ENCODE measurements at regions of chr7 and their contacts with region 1.

Region 1: GRCh38 chr7:25894902-25895791 is 256.9 kb upstream of the NFE2L3 start:
- DNase-seq: peak; percentile 74
- ATAC-seq: peak; percentile 80 to 88

Region 2: GRCh38 chr7:25431956-25432445 is 463.1 kb before region 1 on chr7:
- intact Hi-C with region 1: no loop called
- DNase-seq: no peak
- ATAC-seq: no peak

Region 3: DNA sequence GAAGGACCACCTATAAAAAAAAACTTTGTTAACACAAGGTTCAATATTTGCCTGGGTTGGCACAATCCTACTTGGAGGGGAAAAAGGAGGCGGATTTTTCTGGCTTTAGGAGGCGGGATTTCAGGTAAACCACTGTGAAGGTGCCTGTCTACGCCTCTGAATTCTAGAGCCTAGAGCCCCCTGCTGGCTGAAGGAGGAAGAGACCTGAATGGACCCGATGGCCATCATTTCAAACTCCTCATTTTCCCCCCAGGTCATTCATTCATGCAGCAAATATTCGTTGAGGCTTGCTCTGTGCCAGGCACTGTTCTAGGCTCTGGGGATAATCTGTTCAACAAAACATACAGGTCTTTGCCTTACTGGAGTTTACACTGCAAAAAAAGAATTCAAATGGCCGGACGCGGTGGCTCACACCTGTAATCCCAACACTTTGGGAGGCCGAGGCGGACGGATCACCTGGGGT is 166.6 kb after region 1 on chr7:
- intact Hi-C with region 1: loop called (anchors 2 to 10 kb)
- DNase-seq: peak; percentile 71
- ATAC-seq: peak; percentile 59 to 73

Region 4: GRCh38 chr7:26090927-26091519 is 195.9 kb after region 1 on chr7:
- intact Hi-C with region 1: no loop called
- DNase-seq: no peak
- ATAC-seq: peak; percentile 63 to 80

Region 5: DNA sequence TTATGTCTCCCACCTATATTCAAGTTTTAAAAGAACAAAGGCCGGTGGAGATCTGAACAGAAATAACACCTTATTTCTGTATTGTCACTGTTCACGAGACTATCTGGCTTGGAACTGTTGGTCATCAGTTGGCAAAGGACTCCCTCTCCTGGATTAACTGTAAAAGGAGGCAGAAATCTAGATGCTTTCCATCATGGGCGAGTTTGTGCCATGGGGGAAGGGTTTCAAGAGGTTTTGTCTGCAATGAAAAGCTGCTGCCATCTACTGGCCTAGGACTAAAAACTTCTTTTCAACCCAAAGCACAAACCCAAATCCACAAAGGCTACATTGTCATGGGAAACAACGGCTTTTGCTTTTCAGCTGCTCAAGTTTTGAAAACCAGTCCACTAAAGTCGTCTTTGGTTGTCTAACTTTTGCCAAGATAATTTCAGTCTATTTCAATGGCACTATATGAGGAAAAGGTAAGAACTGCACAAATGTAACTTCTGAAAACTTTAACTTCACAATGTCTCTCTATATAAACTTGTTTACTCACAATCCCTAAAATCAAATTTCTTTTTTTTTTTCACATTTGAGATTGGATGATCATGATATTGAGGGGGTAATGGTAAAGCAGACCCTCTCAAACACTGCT is 772.5 kb after region 1 on chr7:
- intact Hi-C with region 1: loop called in 1 of 2 experiments (anchors 5 kb)
- DNase-seq: peak; percentile 51
- ATAC-seq: peak; percentile 88 to 92

Measured in left cardiac atrium (tissue), 4 donors.